Right ventricle myocardium superior (tissue), 1 donor: ENCODE measurements at regions of chr14 and their contacts with region 1.

Region 1: DNA sequence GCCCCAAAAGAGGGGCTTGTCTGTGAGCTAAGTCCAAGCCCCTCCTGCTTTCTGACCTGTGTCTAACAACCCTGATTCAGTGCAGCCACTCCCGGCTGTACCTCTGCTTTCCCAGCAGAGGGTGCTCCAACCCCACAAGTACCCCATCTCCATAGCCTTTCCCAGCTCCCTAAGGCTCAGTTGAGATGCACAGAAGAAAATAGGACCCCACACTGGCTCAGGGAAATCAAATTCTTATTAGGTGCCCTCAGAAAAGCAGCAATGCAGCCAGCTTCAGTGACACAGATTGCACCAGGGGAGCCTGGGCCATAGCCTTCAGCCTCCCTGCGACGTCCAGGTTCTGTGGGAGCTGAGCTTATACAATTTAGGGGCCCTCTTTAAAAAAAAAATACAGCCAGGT is 49.9 kb downstream of the LRRC74A start:
- DNase-seq: no peak
- ATAC-seq: peak; percentile 94

Region 2: GRCh38 chr14:76910371-76910890 is 34.4 kb after region 1 on chr14:
- intact Hi-C with region 1: loop called (anchors 5 kb)
- DNase-seq: no peak
- ATAC-seq: no peak

Region 3: DNA sequence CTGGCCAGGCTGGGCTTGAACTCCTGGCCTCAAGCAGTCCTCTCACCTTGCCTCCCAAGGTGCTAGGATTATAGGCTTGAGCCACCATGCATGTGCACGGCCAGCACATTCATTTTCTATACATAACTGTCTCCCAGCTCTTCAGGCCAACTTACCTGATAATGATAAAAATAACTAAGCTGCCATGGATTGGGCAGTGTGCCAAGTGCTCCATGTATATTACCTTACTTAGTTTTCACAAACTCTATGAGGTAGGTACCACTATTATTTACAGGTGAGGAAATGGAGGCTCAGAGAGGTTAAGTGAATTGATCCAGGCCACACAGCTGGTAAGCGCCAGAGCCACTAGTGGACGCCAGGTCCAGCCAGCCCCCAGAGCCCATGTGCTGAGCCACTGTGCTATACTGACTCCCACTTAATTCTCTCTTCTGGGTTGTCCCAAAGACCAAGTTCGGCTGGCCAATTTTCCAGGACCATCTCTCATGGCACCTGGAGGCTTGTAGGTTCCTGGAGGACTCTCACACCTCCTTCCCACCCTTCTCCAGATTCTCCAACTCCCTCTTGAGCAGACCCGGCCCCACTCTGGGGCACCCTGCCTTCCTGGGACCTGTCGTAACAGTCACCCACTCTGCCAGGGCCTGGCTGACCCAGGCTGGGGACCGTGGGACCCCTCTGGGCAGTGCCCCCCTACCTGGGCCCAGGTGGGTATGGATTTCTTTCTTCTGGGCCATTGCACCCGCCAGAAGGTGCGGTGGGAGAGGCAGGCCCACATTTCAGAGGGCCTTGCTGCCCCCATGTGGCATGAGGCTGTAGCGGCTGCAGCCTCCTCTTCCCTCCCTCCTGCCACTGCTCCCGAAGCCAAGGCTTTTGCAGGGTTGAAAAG is 191.8 kb after region 1 on chr14:
- intact Hi-C with region 1: loop called (anchors 2 kb)
- DNase-seq: peak; percentile 81
- ATAC-seq: peak; percentile 84

Region 4: DNA sequence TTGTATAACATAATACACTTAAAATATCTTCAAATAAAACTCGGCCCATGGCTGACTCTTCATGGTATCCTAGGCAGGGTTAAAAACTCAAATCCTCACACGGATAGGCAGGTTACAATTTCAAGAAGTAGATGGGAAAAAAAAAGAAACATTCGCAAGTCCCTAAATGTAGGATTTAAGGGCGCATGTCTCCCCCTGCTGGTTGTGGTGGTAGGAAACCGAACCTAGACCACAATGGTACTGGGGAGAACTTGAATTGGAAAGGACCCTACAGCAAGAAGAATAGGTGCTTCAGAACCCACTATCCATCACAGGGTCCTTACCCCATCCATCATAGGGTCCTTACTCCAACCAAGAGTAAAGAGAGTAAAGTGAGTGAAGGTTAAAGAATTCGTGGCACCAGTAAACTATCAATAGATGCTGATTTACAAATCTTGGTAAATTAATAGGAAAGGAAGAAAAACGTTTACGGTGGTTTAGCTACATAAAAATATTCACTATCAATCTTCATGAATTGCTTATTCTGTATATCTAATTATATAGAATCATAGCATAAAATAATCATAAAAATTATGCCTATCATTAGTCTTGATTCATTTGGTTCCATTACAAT is 218.7 kb after region 1 on chr14:
- intact Hi-C with region 1: loop called (anchors 5 kb)
- DNase-seq: peak; percentile 83
- ATAC-seq: no peak

Region 5: DNA sequence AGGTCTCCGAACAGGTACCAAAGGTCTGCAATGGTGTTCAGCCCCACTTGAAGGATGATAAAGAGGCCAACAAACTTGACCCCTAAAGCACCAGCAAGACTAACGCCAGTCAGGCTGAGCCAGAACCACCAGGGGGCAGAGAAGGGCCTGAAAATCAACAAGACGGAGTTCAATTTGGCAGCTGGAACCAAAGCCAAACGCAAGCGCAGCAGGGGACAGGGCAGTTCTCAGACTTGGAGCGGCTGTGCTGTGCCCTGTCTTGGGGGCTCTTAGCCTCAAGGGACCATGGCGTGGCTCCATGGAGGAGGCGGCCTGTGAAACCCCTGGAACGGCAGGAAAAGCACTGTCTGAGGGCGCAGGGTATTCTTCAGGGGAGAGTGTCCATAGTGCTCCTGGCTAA is 425.0 kb after region 1 on chr14:
- intact Hi-C with region 1: no loop called
- DNase-seq: peak; percentile 79
- ATAC-seq: peak; percentile 77

Region 6: GRCh38 chr14:77314043-77314442 is 438.0 kb after region 1 on chr14:
- intact Hi-C with region 1: loop called (anchors 10 kb)
- DNase-seq: no peak
- ATAC-seq: no peak